Heart left ventricle (tissue), 16 donors: ENCODE measurements at regions of chr2 and their contacts with region 1.

Region 1: GRCh38 chr2:156589381-156590079 is 153.4 kb downstream of the GPD2 start:
- DNase-seq: peak in 1 of 5 donors; percentile 6
- ATAC-seq: peak in 3 of 4 donors; percentile 36 to 55 (median 45)
- H3K4me3 ChIP-seq: no peak overlapping the region
- H3K27ac ChIP-seq: no peak overlapping the region
- H3K4me1 ChIP-seq: peaks cover 0 to 7% (median 0%) of the 10 kb centered on the region in 12 donors
- H3K27me3 ChIP-seq: no peaks in the 10 kb centered on the region
- CTCF ChIP-seq: peak; percentile 31 to 71 (median 58)
- POLR2A ChIP-seq: no peak

Region 2: GRCh38 chr2:155382776-155383175 is 1206.8 kb before region 1 on chr2:
- intact Hi-C with region 1: loop called in 5 of 10 experiments (anchors 5 to 10 kb)
- DNase-seq: no peak
- ATAC-seq: no peak
- H3K4me3 ChIP-seq: no peak overlapping the region
- H3K27ac ChIP-seq: no peak overlapping the region
- H3K4me1 ChIP-seq: no peaks in the 10 kb centered on the region
- H3K27me3 ChIP-seq: no peaks in the 10 kb centered on the region
- CTCF ChIP-seq: no peak
- POLR2A ChIP-seq: no peak

Region 3: GRCh38 chr2:156192468-156192867 is 397.1 kb before region 1 on chr2:
- intact Hi-C with region 1: loop called in 8 of 10 experiments (anchors 2 to 10 kb)
- DNase-seq: no peak
- ATAC-seq: no peak
- H3K4me3 ChIP-seq: no peak overlapping the region
- H3K27ac ChIP-seq: no peak overlapping the region
- H3K4me1 ChIP-seq: peaks cover 0 to 4% (median 0%) of the 10 kb centered on the region in 12 donors
- H3K27me3 ChIP-seq: no peaks in the 10 kb centered on the region
- CTCF ChIP-seq: peak in 10 of 12 donors; percentile 10 to 48 (median 30)
- POLR2A ChIP-seq: no peak

Region 4: GRCh38 chr2:156341452-156342253 is 247.9 kb before region 1 on chr2:
- intact Hi-C with region 1: loop called in 6 of 10 experiments (anchors 5 to 10 kb)
- DNase-seq: peak; percentile 93 to 95 (median 94)
- ATAC-seq: peak; percentile 88 to 91 (median 90)
- H3K4me3 ChIP-seq: peak overlapping the region; percentile 75 to 96 (median 90)
- H3K27ac ChIP-seq: peak overlapping the region; percentile 99 to 100 (median 100)
- H3K4me1 ChIP-seq: peaks cover 0 to 36% (median 16%) of the 10 kb centered on the region in 12 donors
- H3K27me3 ChIP-seq: no peaks in the 10 kb centered on the region
- CTCF ChIP-seq: no peak
- POLR2A ChIP-seq: peak in 1 of 2 donors; percentile 73

Region 5: GRCh38 chr2:156435715-156436496 is 153.6 kb before region 1 on chr2 and contains the start of gene GPD2:
- intact Hi-C with region 1: loop called in 5 of 10 experiments (anchors 5 to 10 kb)
- DNase-seq: peak; percentile 94 to 97 (median 95)
- ATAC-seq: peak; percentile 97 to 99 (median 99)
- H3K4me3 ChIP-seq: peak within 1 kb of the TSS; percentile 62 to 92 (median 74)
- H3K27ac ChIP-seq: peak within 1 kb of the TSS; percentile 94 to 100 (median 98)
- H3K4me1 ChIP-seq: peaks cover 0 to 37% (median 20%) of the 10 kb centered on the region in 12 donors
- H3K27me3 ChIP-seq: no peaks in the 10 kb centered on the region
- CTCF ChIP-seq: peak in 5 of 12 donors; percentile 7 to 25 (median 18)
- POLR2A ChIP-seq: peak in 1 of 2 donors; percentile 59
- total RNA-seq, gene GPD2: 12.9 to 24.8 (median 14.4) TPM

Region 6: DNA sequence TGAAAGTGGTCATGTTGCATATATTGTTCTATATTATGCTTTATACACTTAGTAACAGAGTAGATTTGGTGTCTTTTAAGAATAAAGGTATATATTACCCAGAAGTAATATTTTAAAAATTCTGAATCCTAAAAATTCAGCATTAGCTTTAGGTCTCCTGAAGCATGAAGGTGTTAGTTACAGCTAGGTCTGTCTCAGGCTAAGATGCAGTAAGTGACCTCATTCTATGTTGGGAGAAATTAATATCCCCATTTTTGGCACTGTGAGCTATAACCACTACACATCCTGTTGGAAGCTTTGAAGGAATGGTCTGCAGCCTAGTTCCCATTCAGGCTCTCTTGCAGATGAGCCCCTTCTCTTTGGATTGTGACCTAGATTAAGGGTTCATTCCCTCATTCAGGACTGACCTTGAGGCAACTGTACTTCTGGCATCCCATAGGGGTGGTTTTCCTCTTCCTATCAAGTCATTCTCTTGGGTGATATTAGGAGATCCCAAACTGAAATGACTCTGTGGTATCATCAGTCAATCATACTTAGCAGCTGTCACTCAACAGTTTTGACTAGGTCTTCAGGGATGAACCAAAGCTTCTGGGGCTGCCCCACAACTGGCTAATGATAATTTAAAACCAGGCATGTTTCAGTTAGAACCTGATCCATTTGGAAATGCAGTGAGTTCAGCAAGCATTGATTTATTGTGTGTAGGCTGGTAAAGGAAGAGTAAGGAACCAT is 35.7 kb before region 1 on chr2:
- intact Hi-C with region 1: no loop called
- DNase-seq: no peak
- ATAC-seq: no peak
- H3K4me3 ChIP-seq: no peak overlapping the region
- H3K27ac ChIP-seq: no peak overlapping the region
- H3K4me1 ChIP-seq: no peaks in the 10 kb centered on the region
- H3K27me3 ChIP-seq: no peaks in the 10 kb centered on the region
- CTCF ChIP-seq: no peak
- POLR2A ChIP-seq: no peak

Region 7: GRCh38 chr2:156769802-156770201 is 180.3 kb after region 1 on chr2:
- intact Hi-C with region 1: no loop called
- DNase-seq: no peak
- ATAC-seq: no peak
- H3K4me3 ChIP-seq: no peak overlapping the region
- H3K27ac ChIP-seq: no peak overlapping the region
- H3K4me1 ChIP-seq: no peaks in the 10 kb centered on the region
- H3K27me3 ChIP-seq: no peaks in the 10 kb centered on the region
- CTCF ChIP-seq: no peak
- POLR2A ChIP-seq: no peak